ENCODE measurements at regions of chr17 and their contacts with region 1.

Region 1: GRCh38 chr17:68172461-68172954 is 75.3 kb upstream of the AMZ2 start:
- DNase-seq: no peak
- H3K4me3 ChIP-seq: no peak overlapping the region
- H3K27ac ChIP-seq: no peak overlapping the region
- H3K27me3 ChIP-seq: no peaks in the 10 kb centered on the region
- CTCF ChIP-seq: peak; percentile 95

Region 2: DNA sequence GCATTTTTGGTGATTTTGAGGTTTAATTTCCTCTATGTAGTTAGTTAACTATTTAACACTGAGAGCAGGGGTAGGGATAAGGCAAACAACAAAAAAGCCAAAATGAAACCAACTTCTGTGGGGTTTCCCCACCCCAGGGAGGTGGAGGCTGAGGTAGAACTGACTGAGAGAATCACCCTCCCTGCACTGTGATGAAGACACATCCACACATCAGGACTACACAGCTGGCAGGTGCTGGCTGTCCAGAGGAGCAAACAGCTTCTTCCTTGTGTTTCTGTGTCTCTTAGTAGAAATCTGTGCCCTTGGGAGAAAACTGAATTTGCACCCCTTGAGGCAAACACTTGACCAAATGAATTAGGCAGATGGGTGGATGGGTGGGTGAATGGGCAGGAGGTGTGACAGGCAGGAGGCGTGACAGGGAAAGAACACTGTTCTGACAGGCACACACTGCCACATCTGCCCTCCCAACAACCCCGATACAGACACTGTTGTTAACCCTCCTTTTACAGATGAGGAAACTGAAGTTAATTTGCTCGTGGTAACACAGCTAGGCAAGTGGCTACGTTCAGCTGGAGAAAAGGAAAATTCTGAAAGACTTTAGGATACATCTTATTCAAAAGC is 12.4 kb after region 1 on chr17:
- CTCF ChIA-PET with region 1: interaction called, 25 read pairs
- POLR2A ChIA-PET with region 1: interaction called, 4 read pairs
- DNase-seq: no peak
- H3K4me3 ChIP-seq: no peak overlapping the region
- H3K27ac ChIP-seq: no peak overlapping the region
- H3K27me3 ChIP-seq: peaks cover 4% of the 10 kb centered on the region
- CTCF ChIP-seq: no peak

Region 3: GRCh38 chr17:68457539-68458259 is 285.2 kb after region 1 on chr17:
- CTCF ChIA-PET with region 1: interaction called, 19 read pairs
- POLR2A ChIA-PET with region 1: no interaction called
- DNase-seq: peak; percentile 94
- H3K4me3 ChIP-seq: peak overlapping the region; percentile 68
- H3K27ac ChIP-seq: peak overlapping the region; percentile 76
- H3K27me3 ChIP-seq: peaks cover 16% of the 10 kb centered on the region
- CTCF ChIP-seq: no peak

Measured in AG04450 (cell line).